ENCODE measurements at regions of chr5 and their contacts with region 1.

Region 1: GRCh38 chr5:113598926-113599325 is 85.4 kb downstream of the YTHDC2 start:
- DNase-seq: no peak
- ATAC-seq: no peak
- H3K4me3 Mint-ChIP-seq: no peak overlapping the region
- H3K27ac Mint-ChIP-seq: no peak overlapping the region
- H3K4me1 Mint-ChIP-seq: no peaks in the 10 kb centered on the region
- H3K27me3 Mint-ChIP-seq: no peaks in the 10 kb centered on the region
- CTCF ChIP-seq: no peak

Region 2: GRCh38 chr5:113378959-113379541 is 219.9 kb before region 1 on chr5:
- CTCF ChIA-PET with region 1: interaction called, 11 read pairs
- POLR2A ChIA-PET with region 1: no interaction called
- intact Hi-C with region 1: no loop called
- DNase-seq: peak; percentile 76
- ATAC-seq: peak; percentile 76
- H3K4me3 Mint-ChIP-seq: no peak overlapping the region
- H3K27ac Mint-ChIP-seq: no peak overlapping the region
- H3K4me1 Mint-ChIP-seq: peaks cover 26% of the 10 kb centered on the region
- H3K27me3 Mint-ChIP-seq: peaks cover 22% of the 10 kb centered on the region
- CTCF ChIP-seq: peak; percentile 84

Region 3: DNA sequence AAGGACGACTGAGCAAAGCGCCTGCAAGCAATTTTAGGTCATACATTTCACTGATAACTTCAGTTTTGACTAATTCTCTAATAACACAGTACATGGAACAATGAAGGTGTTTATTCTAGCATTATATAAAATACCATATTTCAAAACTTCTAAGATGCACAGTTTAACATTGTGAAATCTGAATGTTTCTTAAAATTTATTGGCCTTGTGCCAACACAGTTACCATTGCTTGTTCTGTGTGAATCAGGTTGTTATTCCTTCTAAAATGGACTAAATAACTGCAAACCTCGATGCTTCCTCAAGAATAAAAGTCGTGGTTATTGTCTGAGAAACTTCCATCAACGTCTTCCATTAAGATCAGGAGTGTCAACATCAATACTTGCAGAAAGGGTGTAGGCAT is 118.7 kb before region 1 on chr5:
- CTCF ChIA-PET with region 1: no interaction called
- POLR2A ChIA-PET with region 1: no interaction called
- intact Hi-C with region 1: no loop called
- DNase-seq: no peak
- ATAC-seq: no peak
- H3K4me3 Mint-ChIP-seq: no peak overlapping the region
- H3K27ac Mint-ChIP-seq: no peak overlapping the region
- H3K4me1 Mint-ChIP-seq: no peaks in the 10 kb centered on the region
- H3K27me3 Mint-ChIP-seq: peaks cover 20% of the 10 kb centered on the region
- CTCF ChIP-seq: no peak

Region 4: GRCh38 chr5:113574417-113574816 is 24.5 kb before region 1 on chr5:
- CTCF ChIA-PET with region 1: no interaction called
- POLR2A ChIA-PET with region 1: no interaction called
- intact Hi-C with region 1: no loop called
- DNase-seq: no peak
- ATAC-seq: no peak
- H3K4me3 Mint-ChIP-seq: no peak overlapping the region
- H3K27ac Mint-ChIP-seq: no peak overlapping the region
- H3K4me1 Mint-ChIP-seq: peaks cover 12% of the 10 kb centered on the region
- H3K27me3 Mint-ChIP-seq: no peaks in the 10 kb centered on the region
- CTCF ChIP-seq: no peak

Measured in activated CD8-positive, alpha-beta T cell treated with anti-CD3 and anti-CD28 coated beads for 36 hours (primary cell).